Colonic mucosa (tissue), 4 donors: ENCODE measurements at regions of chr17 and their contacts with region 1.

Region 1: DNA sequence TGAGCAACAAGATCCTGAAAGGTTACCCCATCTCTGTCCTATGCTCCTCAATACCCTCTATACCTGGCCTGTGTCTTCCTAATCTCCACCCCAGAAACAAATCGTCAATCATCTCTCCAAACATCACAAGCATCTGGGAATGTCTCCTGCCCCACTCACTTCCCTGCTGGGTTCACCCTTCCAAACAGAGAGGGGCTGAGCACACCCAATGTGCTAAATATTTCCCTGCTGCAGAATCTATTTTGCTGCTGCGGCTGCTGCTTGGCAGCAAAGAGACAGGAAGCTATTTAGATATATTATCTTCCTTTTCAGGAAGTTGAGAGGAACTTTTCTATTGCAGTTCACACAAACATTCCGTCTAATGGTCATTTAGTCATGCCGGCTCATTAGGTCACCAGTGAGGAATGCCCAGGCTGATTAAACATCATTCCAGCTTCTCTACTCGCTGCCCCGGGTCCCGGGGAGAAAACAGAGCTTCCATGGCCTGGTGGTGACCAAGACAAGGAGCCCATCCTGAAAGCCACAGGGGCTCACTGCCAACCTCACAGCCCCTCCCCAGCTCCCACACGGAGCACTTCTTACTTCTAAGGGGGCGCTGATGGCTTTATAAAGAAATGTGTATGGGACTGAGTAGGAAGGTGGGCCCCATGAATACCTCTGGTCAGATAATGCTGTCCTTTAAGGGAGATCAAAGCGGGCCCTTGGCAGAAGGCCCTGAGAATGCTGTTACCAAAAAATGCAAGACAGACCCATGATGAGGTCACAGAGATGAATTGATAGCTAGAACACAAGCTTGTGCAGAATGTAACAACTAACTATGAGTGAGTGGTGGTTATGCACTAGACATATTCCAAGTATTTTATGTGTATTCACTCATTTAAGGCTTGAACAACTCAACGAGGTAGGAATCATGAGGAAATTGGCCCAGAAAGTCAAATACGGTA is 218.3 kb downstream of the SOX9 start:
- DNase-seq: peak; percentile 24
- H3K4me3 ChIP-seq: no peak overlapping the region
- H3K27ac ChIP-seq: no peak overlapping the region
- H3K4me1 ChIP-seq: peaks cover 6% of the 10 kb centered on the region
- H3K27me3 ChIP-seq: no peaks in the 10 kb centered on the region
- CTCF ChIP-seq: no peak

Region 2: DNA sequence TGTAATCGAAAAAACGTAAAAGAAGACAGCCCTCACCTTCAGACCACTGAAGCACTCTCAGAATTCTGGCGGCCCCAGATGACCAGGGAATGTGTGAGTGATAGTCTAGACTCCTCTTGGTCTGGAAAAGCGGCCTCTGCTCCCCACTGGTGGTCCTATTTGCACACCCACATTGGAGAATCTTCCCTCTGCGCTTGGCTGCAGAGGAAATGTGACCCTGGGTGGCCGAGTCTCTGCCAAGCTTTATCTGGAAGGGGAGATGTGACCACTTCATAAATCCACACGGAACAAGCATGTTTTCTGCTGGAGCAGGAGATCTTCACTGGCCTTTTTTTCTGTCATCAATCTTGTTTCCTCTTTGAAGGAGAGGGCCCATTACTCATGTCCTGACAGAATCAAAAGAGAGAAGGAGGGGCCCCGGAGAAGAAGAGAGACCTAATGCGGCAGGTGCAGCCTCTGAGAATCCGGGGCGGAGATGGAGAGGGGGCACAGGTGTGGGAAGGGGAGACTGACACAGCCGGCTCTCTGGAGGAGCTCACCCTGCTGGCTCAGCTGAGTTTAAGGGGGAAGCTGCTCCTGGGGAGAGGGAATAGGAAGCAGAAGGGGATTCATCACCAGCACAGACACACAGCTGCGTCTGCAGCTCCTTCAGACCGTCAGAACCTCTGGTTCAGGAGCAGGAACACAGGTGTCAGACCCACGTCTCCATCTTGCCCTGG is 102.0 kb before region 1 on chr17:
- intact Hi-C with region 1: no loop called
- DNase-seq: no peak
- H3K4me3 ChIP-seq: no peak overlapping the region
- H3K27ac ChIP-seq: no peak overlapping the region
- H3K4me1 ChIP-seq: no peaks in the 10 kb centered on the region
- H3K27me3 ChIP-seq: no peaks in the 10 kb centered on the region
- CTCF ChIP-seq: no peak

Region 3: DNA sequence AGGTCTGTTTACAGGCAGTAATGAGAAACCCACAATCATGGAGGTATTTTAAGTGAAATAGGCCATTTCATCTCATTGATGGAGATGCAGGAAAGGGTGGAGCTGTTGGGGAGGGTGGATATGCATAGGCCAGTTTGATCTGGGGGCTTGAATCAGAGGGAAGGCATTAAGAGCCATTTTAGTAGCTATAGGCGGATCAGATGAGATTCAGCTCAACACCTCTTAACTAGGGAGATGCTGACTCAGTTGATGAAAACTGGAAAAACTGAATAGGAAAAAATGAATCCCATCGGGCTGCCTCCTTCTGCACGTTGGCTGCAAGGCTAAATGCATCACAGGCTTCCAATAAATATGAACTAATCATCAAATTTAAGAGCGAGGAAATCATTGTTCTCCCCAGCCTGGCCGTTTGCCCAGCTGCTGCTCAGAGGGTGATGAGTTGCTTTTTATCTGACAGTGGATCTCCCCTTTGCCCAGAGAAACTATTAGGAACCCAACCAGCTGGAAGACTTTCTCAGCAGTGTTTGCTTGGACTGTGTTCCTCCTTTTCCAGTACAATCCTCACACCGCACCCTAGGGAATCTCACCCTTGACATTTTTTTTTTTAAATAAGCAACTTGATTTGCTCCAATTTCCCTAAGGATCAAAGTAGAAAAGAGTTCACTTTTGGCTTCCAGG is 68.7 kb before region 1 on chr17:
- intact Hi-C with region 1: loop called (anchors 5 kb)
- DNase-seq: no peak
- H3K4me3 ChIP-seq: no peak overlapping the region
- H3K27ac ChIP-seq: no peak overlapping the region
- H3K4me1 ChIP-seq: no peaks in the 10 kb centered on the region
- H3K27me3 ChIP-seq: no peaks in the 10 kb centered on the region
- CTCF ChIP-seq: no peak